ENCODE measurements at regions of chr10 and their contacts with region 1.

Region 1: GRCh38 chr10:3785257-3785850 is 345 bp upstream of the KLF6 start:
- DNase-seq: peak; percentile 90
- ATAC-seq: peak; percentile 66
- H3K4me3 ChIP-seq: peak overlapping the region; percentile 78
- H3K27ac ChIP-seq: peak overlapping the region; percentile 96
- H3K4me1 ChIP-seq: peaks cover 14% of the 10 kb centered on the region
- H3K27me3 ChIP-seq: no peaks in the 10 kb centered on the region
- CTCF ChIP-seq: no peak
- EP300 ChIP-seq: 0 out of 4 replicates have a peak, but pooled peaks of 1 of the 2 experiments have one; percentile 4
- POLR2A ChIP-seq: peak; percentile 88
- RAD21 ChIP-seq: no peak

Region 2: DNA sequence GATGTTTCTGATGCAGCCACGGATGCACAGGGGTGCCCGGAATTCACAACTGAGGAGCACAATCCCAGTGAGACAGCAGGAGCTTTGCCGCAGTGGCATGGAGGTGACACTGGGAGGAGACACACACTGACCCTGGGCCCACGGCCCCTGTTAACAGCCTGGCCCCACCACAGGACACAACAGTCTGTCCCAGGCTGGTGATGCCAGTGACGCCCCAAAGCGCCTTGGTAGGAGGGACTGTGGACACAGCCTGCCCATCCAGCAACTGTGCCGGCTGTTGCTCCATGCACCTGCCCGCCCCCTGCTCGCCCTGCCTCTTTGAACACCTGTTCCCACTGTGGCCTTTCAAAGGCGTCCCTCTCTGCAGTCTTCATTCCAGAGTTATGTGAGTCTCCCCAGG is 50.2 kb before region 1 on chr10:
- CTCF ChIA-PET with region 1: interaction called, 7 read pairs
- POLR2A ChIA-PET with region 1: interaction called, 6 read pairs
- RAD21 ChIA-PET with region 1: interaction called, 10 read pairs
- SMC1A ChIA-PET with region 1: interaction called, 11 read pairs
- in situ Hi-C with region 1: no loop called
- intact Hi-C with region 1: loop called (anchors 2 kb)
- DNase-seq: no peak
- ATAC-seq: peak; percentile 67
- H3K4me3 ChIP-seq: no peak overlapping the region
- H3K27ac ChIP-seq: no peak overlapping the region
- H3K4me1 ChIP-seq: no peaks in the 10 kb centered on the region
- H3K27me3 ChIP-seq: no peaks in the 10 kb centered on the region
- CTCF ChIP-seq: peak; percentile 23 to 55 (median 53); a peak in 4 of 6 replicates
- EP300 ChIP-seq: no peak
- POLR2A ChIP-seq: no peak
- RAD21 ChIP-seq: peak; percentile 49

Region 3: GRCh38 chr10:3805791-3806461 is 20.6 kb after region 1 on chr10:
- CTCF ChIA-PET with region 1: interaction called, 7 read pairs
- POLR2A ChIA-PET with region 1: interaction called, 54 read pairs
- RAD21 ChIA-PET with region 1: interaction called, 83 read pairs
- SMC1A ChIA-PET with region 1: interaction called, 50 read pairs
- in situ Hi-C with region 1: no loop called
- intact Hi-C with region 1: loop called (anchors 1 kb)
- DNase-seq: no peak
- ATAC-seq: peak; percentile 54
- H3K4me3 ChIP-seq: 0 out of 2 replicates have a peak overlapping the region, but pooled peaks have one; percentile 29
- H3K27ac ChIP-seq: peak overlapping the region; percentile 85
- H3K4me1 ChIP-seq: peaks cover 48% of the 10 kb centered on the region
- H3K27me3 ChIP-seq: no peaks in the 10 kb centered on the region
- CTCF ChIP-seq: no peak
- EP300 ChIP-seq: peak; percentile 46 to 65; a peak in 2 of 4 replicates
- POLR2A ChIP-seq: no peak; the same call in 1 of the 2 replicates
- RAD21 ChIP-seq: no peak

Region 4: DNA sequence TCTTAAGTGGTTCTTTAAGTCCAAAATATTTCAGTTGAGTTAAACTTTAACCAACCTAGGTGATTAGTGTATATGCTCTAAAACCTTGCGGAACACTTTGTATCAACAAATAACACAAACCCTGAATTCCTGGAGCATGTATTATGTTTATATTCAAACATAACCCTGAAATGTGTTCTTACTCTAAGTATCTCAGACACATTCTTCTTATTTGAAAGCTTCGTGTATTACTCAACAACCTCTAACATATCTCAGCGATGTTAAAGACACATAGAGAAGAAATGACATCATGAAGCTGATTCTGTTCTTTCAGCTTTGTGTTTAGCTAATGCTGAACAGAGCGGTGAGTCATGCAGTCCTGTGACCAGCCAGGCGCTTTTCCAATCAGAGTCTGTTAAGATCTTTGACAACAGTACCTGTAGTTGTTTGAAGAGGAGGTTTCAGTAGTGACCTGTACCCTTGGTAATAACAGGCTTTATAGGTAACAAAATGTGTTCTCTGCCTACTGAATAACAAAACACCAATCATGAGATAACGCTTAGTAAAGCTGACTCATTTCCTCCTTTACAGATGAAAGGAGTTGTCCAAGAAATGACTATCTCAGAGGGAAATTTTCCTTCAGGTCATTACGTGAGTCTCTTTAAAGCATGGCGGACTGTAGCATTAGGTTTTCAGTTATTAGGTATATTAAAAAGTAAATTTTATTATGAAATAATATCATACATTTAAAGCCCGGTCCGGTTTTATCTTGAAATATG is 67.0 kb after region 1 on chr10:
- CTCF ChIA-PET with region 1: interaction called, 18 read pairs
- POLR2A ChIA-PET with region 1: interaction called, 32 read pairs
- RAD21 ChIA-PET with region 1: interaction called, 98 read pairs
- SMC1A ChIA-PET with region 1: interaction called, 73 read pairs
- in situ Hi-C with region 1: no loop called
- intact Hi-C with region 1: loop called (anchors 1 kb)
- DNase-seq: peak; percentile 88
- ATAC-seq: peak; percentile 95
- H3K4me3 ChIP-seq: peak overlapping the region; percentile 40
- H3K27ac ChIP-seq: peak overlapping the region; percentile 73
- H3K4me1 ChIP-seq: peaks cover 31% of the 10 kb centered on the region
- H3K27me3 ChIP-seq: no peaks in the 10 kb centered on the region
- CTCF ChIP-seq: no peak
- EP300 ChIP-seq: peak; percentile 99 to 100
- POLR2A ChIP-seq: no peak
- RAD21 ChIP-seq: peak; percentile 21

Region 5: DNA sequence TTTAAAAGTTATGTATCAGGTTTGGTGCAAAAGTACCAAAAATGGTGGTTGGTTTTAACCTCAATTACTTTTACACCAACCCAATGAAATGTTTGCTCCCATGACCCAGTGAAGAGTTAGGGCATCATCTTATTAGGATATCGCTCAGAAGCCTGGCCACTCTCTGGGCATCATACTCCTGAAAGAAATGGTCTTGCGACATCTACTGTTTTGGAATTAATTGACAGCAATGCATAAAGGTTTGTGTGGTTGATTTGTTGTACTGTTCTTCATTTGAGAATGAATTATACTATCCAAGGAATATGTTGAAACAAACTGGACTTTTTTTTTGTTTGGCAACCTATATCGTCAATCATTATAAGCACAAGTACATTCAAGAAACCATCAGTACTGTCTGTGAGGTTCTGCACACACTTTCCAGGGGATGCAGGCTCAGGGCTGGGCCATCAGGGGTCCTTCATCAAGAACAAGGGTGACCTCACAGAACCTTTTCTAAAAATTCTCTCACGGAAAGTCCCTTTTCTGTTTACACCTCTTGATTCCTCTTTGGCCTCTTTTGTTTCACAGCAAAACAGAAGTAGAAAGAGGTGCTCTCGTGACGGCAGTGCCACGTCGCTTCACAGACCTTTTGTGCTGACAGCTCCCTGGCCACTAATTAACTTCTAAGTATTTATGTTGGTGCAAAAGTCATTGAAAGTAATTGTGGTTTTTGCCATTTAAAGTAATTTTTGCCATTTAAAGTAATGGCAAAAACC is 116.9 kb after region 1 on chr10:
- CTCF ChIA-PET with region 1: interaction called, 5 read pairs
- POLR2A ChIA-PET with region 1: interaction called, 7 read pairs
- RAD21 ChIA-PET with region 1: interaction called, 45 read pairs
- SMC1A ChIA-PET with region 1: interaction called, 30 read pairs
- in situ Hi-C with region 1: no loop called
- intact Hi-C with region 1: loop called (anchors 1 kb)
- DNase-seq: peak; percentile 93
- ATAC-seq: peak; percentile 95
- H3K4me3 ChIP-seq: no peak overlapping the region; the same call in 1 of the 2 replicates
- H3K27ac ChIP-seq: peak overlapping the region; percentile 75
- H3K4me1 ChIP-seq: peaks cover 25% of the 10 kb centered on the region
- H3K27me3 ChIP-seq: no peaks in the 10 kb centered on the region
- CTCF ChIP-seq: peak; percentile 18 to 38 (median 25); a peak in 4 of 6 replicates
- EP300 ChIP-seq: peak; percentile 99; a peak in 3 of 4 replicates
- POLR2A ChIP-seq: no peak
- RAD21 ChIP-seq: peak; percentile 70

Measured in GM12878 (cell line).